ENCODE measurements at regions of chr11 and their contacts with region 1.

Region 1: GRCh38 chr11:124793466-124794278 is 6.5 kb downstream of the MSANTD2 start:
- DNase-seq: peak; percentile 66 to 81 (median 76)
- H3K4me3 ChIP-seq: no peak overlapping the region
- H3K27ac ChIP-seq: no peak overlapping the region
- H3K4me1 ChIP-seq: peaks cover 0 to 3% (median 2%) of the 10 kb centered on the region in 4 experiments
- H3K27me3 ChIP-seq: peaks cover 0 to 8% (median 0%) of the 10 kb centered on the region in 5 experiments

Region 2: GRCh38 chr11:124633355-124633754 is 160.3 kb before region 1 on chr11:
- CTCF ChIA-PET with region 1: interaction called, 16 read pairs
- POLR2A ChIA-PET with region 1: no interaction called
- DNase-seq: peak; percentile 22 to 57 (median 54)
- H3K4me3 ChIP-seq: no peak overlapping the region
- H3K27ac ChIP-seq: no peak overlapping the region
- H3K4me1 ChIP-seq: no peaks in the 10 kb centered on the region
- H3K27me3 ChIP-seq: no peaks in the 10 kb centered on the region

Region 3: DNA sequence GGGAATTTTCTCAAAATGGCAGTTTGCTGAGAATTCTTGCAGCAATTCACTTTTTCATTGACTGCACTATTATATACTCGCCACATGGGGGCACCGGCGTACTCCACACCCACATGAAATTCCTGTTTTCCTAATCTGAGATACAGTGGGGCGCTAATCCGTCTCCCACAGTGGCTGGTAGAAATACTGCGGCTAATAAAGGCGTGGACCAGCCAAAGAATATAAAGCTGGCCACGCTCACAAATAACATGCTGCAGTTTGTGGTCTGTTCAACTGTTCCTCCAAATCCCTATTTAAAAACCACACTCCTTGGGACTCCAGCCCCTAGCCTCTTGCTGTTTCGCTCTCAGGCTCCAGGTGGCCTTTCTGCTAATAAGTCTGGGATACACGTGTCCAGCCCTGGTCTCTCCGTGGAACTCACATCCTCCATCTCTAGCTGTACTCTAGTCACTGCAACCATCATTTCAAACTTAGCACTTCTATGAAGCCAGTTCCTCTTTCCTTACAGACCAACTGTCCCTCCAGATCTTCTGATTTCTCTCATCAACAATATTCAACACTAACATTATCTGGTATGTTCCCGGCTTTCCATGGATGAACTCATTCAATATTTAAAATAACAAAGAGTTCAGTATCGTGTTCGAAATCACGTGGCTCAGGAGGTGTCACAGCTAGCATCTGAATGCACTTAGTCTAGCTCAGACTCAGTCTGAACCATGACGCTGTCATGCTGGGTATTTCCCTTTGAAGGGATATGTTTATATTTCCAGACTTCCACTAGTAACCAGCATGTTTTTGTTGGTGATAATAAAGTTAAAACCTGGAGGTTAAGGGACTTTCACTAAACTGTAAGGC is 149.0 kb before region 1 on chr11:
- CTCF ChIA-PET with region 1: interaction called, 17 read pairs
- POLR2A ChIA-PET with region 1: interaction called, 3 read pairs
- DNase-seq: peak; percentile 60 to 69 (median 61)
- H3K4me3 ChIP-seq: peak overlapping the region in 2 of 7 experiments; percentile 4 to 48
- H3K27ac ChIP-seq: no peak overlapping the region
- H3K4me1 ChIP-seq: peaks cover 0 to 29% (median 13%) of the 10 kb centered on the region in 4 experiments
- H3K27me3 ChIP-seq: no peaks in the 10 kb centered on the region

Region 4: DNA sequence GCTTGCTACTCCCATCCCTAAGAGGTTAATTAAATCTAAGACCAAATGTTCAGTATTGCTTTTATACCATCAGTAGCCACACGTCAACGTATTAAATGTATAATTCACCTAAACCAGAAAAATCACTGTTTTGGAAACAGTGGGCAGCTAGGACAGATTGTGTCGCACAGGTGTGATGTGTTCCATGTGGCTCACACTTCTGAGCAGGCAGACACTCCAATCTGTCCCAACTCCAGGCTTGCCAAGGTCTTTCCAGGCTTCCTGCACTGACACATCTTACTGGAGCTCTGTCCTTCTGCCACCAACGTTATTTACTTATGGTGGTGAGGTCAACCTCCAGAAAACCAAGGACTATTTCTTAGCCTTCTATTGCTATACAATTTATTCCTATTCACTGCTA is 131.6 kb before region 1 on chr11:
- CTCF ChIA-PET with region 1: interaction called, 22 read pairs
- POLR2A ChIA-PET with region 1: no interaction called
- DNase-seq: no peak
- H3K4me3 ChIP-seq: no peak overlapping the region
- H3K27ac ChIP-seq: no peak overlapping the region
- H3K4me1 ChIP-seq: no peaks in the 10 kb centered on the region
- H3K27me3 ChIP-seq: no peaks in the 10 kb centered on the region

Region 5: DNA sequence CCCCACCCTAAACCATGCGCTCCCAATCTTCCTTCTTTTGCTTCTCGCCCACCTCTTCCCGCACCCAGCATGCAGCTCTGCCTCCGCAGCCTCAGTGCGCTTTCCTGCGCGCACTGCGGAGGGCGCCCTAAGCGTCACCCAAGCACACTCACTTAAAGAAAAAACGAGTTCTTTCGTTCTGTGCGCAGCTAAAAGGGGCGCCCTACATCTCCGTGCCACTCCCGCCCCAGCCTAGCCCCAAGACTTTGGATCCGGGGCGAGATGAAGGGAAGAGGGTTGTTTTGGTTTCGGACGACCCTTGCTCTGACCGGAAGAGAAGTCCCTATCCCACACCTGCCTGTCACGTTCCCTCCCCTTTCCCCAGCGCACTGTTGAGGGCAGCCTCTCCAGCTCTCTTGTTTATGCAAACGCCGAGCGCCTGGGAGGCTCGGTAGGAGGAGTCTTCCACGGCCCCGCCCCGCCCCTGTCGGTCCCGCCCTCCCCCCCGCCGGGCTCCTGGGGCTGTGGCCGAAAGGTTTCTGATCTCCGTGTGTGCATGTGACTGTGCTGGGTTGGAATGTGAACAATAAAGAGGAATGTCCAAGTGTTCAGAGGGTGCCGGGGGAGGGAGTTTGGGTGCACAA is 46.9 kb before region 1 on chr11:
- CTCF ChIA-PET with region 1: interaction called, 13 read pairs
- POLR2A ChIA-PET with region 1: no interaction called
- DNase-seq: peak; percentile 87 to 91 (median 88)
- H3K4me3 ChIP-seq: peak overlapping the region; percentile 37 to 91 (median 81)
- H3K27ac ChIP-seq: peak overlapping the region in 1 of 2 experiments; percentile 36
- H3K4me1 ChIP-seq: peaks cover 0 to 29% (median 13%) of the 10 kb centered on the region in 4 experiments
- H3K27me3 ChIP-seq: no peaks in the 10 kb centered on the region

Region 6: DNA sequence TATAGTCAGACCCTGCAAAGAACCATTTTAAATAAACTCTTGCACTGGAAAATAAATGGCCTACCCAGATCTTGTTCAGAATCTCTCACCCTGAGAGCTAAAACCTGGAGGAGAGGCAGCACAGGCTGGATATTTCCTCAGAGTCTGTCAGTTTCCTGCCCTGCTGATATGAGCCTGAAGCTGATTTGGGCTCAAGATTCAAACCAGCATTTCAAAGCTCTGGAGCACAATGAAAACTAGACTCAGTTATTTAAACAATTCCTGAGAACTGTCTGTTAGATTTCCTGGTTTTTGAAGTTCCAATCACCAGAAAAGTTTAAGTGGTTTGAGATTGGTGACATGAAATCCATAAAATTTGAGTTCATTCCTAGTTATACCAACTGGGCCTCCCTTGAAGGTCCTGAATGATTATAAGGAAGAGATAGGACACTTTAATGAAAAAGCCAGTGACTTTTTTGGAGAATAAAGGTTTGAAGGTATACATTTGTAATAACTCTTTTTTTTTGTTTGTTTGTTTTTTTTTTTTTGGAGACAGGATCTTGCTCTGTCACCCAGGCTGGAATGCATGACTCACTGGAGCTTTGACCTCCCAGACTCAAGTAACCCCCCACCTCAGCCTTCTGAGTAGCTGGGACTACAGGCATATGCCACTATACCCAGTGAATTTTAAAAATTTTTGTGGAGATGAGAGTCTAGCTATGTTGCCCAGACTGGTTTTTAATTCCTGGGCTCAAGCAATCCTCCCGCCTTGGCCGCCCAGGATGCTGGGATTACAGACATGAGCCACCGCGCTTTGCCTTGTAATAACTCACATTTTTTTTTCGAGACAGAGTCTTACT is 23.7 kb before region 1 on chr11:
- CTCF ChIA-PET with region 1: interaction called, 54 read pairs
- POLR2A ChIA-PET with region 1: no interaction called
- DNase-seq: no peak
- H3K4me3 ChIP-seq: no peak overlapping the region
- H3K27ac ChIP-seq: no peak overlapping the region
- H3K4me1 ChIP-seq: no peaks in the 10 kb centered on the region
- H3K27me3 ChIP-seq: peaks cover 0 to 1% (median 0%) of the 10 kb centered on the region in 5 experiments

Region 7: DNA sequence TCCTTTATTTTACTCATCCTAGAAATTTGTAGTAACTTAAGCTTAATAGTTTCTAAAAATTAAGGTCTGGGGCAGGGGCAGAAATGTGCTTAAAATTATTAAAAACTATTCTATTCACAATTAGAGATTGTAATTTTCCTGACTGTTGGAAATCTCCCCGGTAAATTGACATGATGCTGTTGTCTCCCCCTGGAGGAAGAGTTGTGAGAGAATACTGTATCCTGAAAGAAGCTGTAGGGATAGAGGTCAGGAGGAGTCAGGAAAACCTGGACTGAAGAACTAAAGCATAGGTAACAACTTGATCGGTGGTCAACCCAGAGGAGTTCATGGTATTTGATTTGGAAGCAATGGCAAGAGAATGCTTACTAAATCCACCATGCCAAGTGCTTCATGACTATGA is 15.4 kb before region 1 on chr11:
- CTCF ChIA-PET with region 1: interaction called, 43 read pairs
- POLR2A ChIA-PET with region 1: no interaction called
- DNase-seq: no peak
- H3K4me3 ChIP-seq: no peak overlapping the region
- H3K27ac ChIP-seq: no peak overlapping the region
- H3K4me1 ChIP-seq: peaks cover 0 to 5% (median 2%) of the 10 kb centered on the region in 4 experiments
- H3K27me3 ChIP-seq: peaks cover 0 to 2% (median 0%) of the 10 kb centered on the region in 5 experiments